Cardiac septum (tissue), 1 donor: ENCODE measurements at regions of chr22 and their contacts with region 1.

Region 1: DNA sequence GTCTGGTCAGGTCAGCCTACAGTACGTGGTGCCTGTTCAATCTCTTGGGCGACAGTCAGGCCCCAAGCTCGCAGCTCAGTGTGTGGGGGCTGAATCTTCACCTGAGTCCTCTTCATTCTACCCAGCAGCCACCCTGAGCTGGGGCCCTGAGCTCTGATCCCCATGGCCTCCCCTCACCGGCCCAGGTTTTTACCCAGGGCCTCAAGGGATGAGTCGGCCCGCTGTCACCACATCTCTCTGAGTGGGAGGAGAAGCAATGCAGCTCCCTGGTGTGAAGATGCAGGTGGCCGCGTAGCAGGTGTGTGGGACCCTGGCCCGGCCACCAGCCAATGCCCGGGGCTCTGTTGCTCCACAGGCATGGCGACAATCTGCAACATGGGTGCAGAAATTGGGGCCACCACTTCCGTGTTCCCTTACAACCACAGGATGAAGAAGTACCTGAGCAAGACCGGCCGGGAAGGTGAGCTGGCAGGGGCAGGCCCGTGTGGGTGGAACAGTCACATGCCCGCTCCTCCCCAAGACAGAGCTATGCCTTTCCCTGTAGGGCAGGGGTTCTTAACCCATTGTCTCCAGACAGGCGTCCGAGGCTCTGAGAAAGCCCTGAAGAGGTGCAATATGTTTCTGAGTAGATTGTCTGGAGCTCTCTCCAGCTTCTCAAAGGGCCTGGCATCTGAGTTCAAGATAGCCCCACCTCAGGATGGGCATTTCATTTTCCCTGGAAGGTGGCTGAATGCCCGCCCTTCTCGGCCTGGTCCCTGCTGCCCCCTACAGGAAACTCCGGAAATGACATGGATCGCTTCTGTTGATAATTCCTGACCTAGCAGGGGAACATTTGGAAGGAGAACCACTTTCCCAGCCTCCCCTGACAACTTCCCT is 26.9 kb downstream of the POLR3H start:
- DNase-seq: no peak

Region 2: DNA sequence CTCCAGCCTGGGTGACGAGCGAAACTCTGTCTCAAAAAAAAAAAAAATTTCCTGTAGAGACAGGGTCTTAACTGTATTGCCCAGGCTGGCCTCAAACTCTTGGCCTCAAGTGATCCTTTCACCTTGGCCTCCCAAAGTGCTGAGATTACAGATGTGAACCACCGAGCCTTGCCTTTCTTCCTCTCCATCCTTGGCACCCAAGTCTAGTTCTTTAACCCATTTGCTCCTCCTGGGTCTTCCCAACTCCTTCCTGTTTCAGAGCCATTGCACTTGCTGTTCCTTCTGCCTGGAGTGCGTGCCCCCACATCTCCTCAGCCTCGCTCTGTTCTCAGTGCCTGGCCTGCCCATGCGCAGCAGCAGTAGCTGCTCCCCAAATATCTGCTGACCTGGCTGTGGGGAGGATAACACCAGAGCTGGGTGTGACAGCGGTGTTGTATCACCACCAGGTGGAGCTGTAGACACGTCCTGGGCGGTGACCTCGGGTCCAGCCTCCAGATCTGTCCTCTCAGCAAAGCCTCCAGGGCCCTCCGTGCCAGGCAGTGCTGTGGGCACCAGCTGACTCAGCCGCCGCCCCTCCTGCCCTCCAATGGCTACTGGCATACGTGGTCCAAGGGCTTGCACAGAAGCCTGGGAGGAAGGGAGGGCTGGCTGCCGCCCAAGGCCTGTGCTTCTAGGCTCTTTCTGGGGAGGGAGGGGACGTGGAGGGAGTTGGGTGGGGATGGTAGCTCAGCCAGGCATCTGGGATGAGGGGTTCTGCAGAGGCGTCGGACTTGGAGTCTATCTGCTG is 113.7 kb before region 1 on chr22:
- intact Hi-C with region 1: loop called (anchors 2 kb)
- DNase-seq: peak; percentile 95

Region 3: DNA sequence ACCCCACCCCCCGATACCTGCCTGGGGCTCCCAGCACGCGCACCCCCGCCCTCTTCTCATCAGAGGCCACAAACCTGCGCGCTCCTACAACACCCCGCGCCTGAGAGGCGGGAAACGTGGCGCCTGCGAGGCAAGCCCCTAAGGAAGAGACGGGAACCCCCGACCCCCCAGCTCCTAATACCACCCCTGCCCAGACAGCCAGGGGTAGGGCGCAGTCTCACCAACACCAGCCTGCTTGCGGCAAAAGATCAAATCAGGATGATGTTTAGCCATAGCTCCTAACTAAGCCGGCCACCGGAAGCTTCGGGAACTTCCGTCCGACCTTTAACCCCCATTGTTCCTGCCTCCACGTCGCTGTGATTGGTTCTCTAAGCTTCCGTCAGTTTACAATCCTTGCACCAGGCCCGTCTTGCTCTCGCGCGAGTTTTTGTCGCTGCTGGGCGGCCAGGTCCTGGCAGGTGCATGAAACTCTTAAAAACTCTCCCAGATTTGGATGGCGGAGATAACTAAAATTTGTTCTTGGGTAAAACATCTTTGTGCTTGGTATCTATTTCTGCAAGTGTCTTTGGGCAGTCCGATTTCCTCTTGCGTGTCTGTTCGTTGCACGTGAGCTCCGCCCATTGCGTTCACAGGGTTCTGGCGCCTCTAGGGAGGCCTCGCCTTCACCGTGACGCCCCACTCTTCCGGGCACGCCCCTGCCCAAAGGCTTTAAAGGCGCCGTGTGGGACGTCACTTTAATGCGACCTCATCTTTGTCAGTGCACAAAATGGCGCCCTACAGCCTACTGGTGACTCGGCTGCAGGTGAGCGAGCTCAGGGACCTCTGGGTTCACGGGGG is 48.8 kb before region 1 on chr22 and contains the starts of genes ACO2 and PHF5A:
- intact Hi-C with region 1: loop called (anchors 5 kb)
- DNase-seq: peak; percentile 98
- total RNA-seq, gene ACO2: 662 TPM
- total RNA-seq, gene PHF5A: 22.0 TPM